Upper lobe of right lung (tissue), 1 donor: ENCODE measurements at regions of chr1 and their contacts with region 1.

Region 1: DNA sequence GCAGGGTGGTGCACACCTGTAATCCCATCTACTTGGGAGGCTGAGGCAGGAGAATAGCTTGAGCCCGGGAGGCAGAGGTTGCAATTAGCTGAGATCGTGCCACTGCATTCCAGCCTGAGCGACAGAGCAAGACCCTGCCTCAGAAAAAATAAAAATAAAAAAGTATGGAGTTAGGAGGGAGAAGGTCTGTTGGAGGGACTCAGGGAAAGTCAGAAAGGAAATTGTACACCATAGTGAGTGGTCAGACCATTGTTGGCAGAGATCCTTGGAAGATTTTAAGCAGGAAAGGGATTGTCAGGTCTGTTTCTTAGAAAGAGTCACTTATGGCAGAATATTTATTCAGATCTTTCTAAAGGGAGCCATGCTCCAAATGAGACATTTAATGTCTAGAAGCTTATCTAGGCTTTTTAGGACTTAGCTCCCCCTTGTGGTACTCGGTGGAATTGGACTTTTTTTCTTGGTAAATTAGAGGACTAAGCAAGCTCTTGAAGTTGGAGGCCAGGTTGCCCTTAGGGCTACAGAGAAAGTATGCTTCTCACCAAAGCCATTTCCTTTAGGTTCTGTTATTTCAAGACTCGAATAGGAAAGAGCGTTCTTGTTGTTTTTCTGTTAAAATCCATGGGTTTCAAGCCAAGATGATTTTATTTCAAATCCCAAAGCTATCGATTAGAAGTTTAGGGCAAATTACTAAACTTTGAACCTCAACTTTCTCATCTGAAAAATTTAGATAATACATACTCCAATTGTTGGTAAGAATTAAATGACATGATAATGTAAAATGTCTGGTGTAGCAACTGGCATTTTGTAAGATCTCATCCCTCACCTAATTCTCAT is 16.5 kb downstream of the MIA3 start:
- DNase-seq: no peak
- ATAC-seq: peak; percentile 93
- H3K4me3 ChIP-seq: no peak overlapping the region
- H3K27ac ChIP-seq: no peak overlapping the region
- H3K4me1 ChIP-seq: no peaks in the 10 kb centered on the region
- H3K27me3 ChIP-seq: no peaks in the 10 kb centered on the region
- CTCF ChIP-seq: peak; percentile 93

Region 2: GRCh38 chr1:222369148-222369547 is 265.2 kb before region 1 on chr1:
- intact Hi-C with region 1: no loop called
- DNase-seq: no peak
- ATAC-seq: no peak
- H3K4me3 ChIP-seq: no peak overlapping the region
- H3K27ac ChIP-seq: no peak overlapping the region
- H3K4me1 ChIP-seq: no peaks in the 10 kb centered on the region
- H3K27me3 ChIP-seq: no peaks in the 10 kb centered on the region
- CTCF ChIP-seq: no peak

Region 3: DNA sequence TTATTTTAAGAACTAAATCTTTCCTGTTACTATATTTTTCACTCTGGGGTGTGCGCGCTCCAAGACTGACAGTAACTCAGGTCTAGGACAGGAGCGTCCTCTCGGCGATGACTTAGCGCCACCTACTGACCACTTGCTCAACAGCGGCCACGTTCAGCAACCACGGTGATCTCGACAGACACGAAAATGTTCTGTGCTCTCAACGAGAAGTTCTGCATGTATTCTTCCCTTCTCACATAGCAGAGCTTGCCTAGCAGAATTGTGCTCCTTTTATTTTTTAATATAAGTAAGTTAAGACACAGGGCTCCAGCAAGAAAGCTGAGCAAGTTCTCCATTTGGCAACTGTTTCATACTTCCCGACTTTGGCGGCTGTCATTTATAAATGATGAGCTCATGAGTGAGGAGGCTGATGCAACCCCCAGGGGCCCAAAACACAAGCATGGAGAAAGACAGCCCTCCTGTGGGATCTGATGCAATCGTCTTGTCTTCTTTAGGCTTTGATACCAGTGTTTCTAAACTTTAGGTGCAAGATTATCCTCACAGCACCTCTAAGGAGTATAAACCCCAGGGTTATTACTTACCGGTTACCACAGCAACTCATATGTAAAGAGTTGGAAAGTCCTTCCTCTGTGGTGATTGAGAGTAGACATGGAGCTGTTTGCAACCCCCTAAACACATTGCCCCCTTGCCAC is 179.1 kb before region 1 on chr1:
- intact Hi-C with region 1: no loop called
- DNase-seq: peak; percentile 86
- ATAC-seq: peak; percentile 95
- H3K4me3 ChIP-seq: no peak overlapping the region
- H3K27ac ChIP-seq: no peak overlapping the region
- H3K4me1 ChIP-seq: peaks cover 8% of the 10 kb centered on the region
- H3K27me3 ChIP-seq: no peaks in the 10 kb centered on the region
- CTCF ChIP-seq: peak; percentile 92

Region 4: DNA sequence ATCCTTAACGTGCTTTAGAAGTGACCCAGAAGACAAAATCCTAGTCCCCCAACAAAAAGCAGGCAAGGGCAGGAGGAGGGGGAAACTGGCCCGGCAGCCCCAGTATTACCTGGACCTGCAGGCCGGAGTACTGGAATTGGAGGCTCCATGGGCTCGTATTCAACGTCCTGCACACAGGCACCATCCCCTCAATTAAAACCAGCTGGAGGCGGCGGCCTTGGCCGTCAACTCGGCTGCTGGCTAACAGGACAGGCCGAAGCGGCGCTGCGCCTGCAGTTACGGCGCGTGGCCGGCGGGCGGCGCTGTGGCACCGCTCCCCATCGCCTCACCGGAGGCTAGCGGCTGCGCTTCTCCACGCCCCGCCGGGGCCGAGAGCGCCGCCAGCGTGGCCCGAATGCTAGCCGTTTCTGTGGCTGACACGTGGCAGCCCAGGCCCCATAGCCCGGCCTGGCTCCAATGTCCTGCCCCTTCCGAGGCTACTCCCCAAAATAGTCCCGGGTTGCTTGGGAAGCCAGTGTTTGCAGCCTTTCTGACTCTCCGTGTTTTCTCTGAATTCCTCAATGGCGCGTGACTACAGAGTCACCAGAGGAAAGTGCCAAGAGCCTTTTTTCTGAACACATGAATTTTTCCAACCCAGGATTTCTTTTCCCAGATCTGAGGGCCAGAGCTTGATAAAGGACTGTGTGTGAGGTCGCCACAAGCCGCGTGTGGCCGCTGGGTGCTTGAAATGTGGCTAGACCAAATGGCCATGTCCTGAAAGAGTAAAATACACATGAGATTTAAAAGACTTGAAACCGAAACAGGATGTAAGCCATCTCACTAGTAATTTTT is 169.0 kb before region 1 on chr1:
- intact Hi-C with region 1: loop called (anchors 5 kb)
- DNase-seq: peak; percentile 96
- ATAC-seq: peak; percentile 100
- H3K4me3 ChIP-seq: peak overlapping the region; percentile 56
- H3K27ac ChIP-seq: peak overlapping the region; percentile 90
- H3K4me1 ChIP-seq: no peaks in the 10 kb centered on the region
- H3K27me3 ChIP-seq: no peaks in the 10 kb centered on the region
- CTCF ChIP-seq: peak; percentile 100

Region 5: DNA sequence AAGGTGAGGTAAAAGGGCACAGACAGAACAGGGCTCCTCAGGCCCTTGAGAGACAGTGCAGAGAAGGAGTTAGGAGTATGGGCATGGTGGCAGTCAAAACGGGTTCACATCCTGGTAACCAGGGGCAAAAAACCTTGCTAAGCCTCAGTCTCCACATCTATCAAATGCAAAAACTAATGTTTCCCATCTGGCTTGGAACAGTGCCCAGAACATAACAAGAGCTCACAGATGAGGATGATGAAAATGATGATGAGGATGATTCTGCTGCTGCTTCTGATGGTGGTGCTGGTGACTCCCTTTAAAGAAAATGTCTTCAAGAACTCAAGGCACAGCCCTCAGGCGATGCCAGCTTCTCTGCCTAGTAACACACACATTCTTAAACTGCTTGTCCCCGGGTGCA is 110.5 kb before region 1 on chr1:
- intact Hi-C with region 1: no loop called
- DNase-seq: no peak
- ATAC-seq: no peak
- H3K4me3 ChIP-seq: no peak overlapping the region
- H3K27ac ChIP-seq: no peak overlapping the region
- H3K4me1 ChIP-seq: no peaks in the 10 kb centered on the region
- H3K27me3 ChIP-seq: no peaks in the 10 kb centered on the region
- CTCF ChIP-seq: no peak